ENCODE measurements at regions of chr18 and their contacts with region 1.

Region 1: GRCh38 chr18:77108001-77108692 is 24.4 kb downstream of the MBP start:
- DNase-seq: peak in 3 of 5 donors; percentile 33 to 67 (median 38)
- H3K4me3 ChIP-seq: no peak overlapping the region
- H3K4me3 Mint-ChIP-seq: peak overlapping the region in 7 of 8 donors; percentile 74 to 92 (median 82)
- H3K27ac ChIP-seq: peak overlapping the region; percentile 67
- H3K27ac Mint-ChIP-seq: peak overlapping the region; percentile 86 to 99 (median 97)
- H3K4me1 ChIP-seq: peaks cover 98% of the 10 kb centered on the region
- H3K4me1 Mint-ChIP-seq: peaks cover 78 to 100% (median 88%) of the 10 kb centered on the region in 4 donors
- H3K27me3 ChIP-seq: no peaks in the 10 kb centered on the region
- H3K27me3 Mint-ChIP-seq: no peaks in the 10 kb centered on the region

Region 2: GRCh38 chr18:76699923-76700322 is 408.2 kb before region 1 on chr18:
- CTCF ChIA-PET with region 1: no interaction called
- POLR2A ChIA-PET with region 1: no interaction called
- intact Hi-C with region 1: no loop called
- DNase-seq: no peak
- H3K4me3 ChIP-seq: no peak overlapping the region
- H3K4me3 Mint-ChIP-seq: no peak overlapping the region
- H3K27ac ChIP-seq: no peak overlapping the region
- H3K27ac Mint-ChIP-seq: no peak overlapping the region
- H3K4me1 ChIP-seq: no peaks in the 10 kb centered on the region
- H3K4me1 Mint-ChIP-seq: peaks cover 0 to 2% (median 0%) of the 10 kb centered on the region in 4 donors
- H3K27me3 ChIP-seq: peaks cover 7% of the 10 kb centered on the region
- H3K27me3 Mint-ChIP-seq: peaks cover 29 to 35% of the 10 kb centered on the region in 2 donors

Region 3: DNA sequence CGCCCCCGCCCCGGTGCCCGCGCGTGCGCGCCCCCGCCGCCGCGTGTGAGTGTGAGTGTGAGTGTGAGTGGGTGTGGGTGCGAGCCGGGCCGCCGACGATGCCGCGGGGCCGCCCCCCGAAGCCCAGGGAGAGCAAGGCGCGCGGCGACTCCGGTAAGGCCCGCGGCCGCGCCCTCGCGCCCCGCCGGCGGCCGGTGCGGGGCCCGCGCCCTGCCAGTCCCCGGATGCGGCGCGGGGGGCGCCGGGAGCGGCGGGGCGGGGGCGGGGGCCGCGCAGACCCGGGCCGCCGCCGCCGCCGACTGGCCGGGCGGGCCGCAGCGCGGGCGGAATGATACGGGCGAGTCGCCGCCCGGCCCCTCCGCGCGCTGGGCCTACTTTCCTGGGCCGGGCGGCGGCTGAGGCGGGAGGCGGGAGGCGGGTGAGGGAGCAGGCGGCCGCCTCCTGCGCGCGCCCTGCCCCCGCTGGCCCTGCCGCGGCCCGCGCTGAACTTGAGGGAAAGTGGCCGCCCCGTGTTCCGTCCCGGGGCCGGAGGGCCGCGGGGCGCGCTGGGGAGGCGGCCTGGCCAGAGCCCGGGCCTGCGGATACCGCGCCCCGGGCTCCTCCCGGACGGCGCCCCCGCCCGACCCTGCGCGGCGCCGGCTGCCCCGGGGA is 285.5 kb before region 1 on chr18 and contains the start of gene ZNF236:
- CTCF ChIA-PET with region 1: no interaction called
- POLR2A ChIA-PET with region 1: no interaction called
- intact Hi-C with region 1: no loop called
- DNase-seq: peak; percentile 61 to 74 (median 70)
- H3K4me3 ChIP-seq: peak within 1 kb of the TSS; percentile 93 to 98
- H3K4me3 Mint-ChIP-seq: peak within 1 kb of the TSS; percentile 91 to 97 (median 95)
- H3K27ac ChIP-seq: peak within 1 kb of the TSS; percentile 88
- H3K27ac Mint-ChIP-seq: peak within 1 kb of the TSS; percentile 92 to 97 (median 97)
- H3K4me1 ChIP-seq: peaks cover 47% of the 10 kb centered on the region
- H3K4me1 Mint-ChIP-seq: peaks cover 33 to 69% (median 54%) of the 10 kb centered on the region in 4 donors
- H3K27me3 ChIP-seq: no peaks in the 10 kb centered on the region
- H3K27me3 Mint-ChIP-seq: no peaks in the 10 kb centered on the region
- total RNA-seq, gene ZNF236: 28.3 to 29.1 TPM

Region 4: GRCh38 chr18:77054606-77055428 is 53.3 kb before region 1 on chr18:
- CTCF ChIA-PET with region 1: interaction called, 10 read pairs
- POLR2A ChIA-PET with region 1: interaction called, 14 read pairs
- intact Hi-C with region 1: no loop called
- DNase-seq: peak; percentile 80 to 88 (median 86)
- H3K4me3 ChIP-seq: peak overlapping the region in 1 of 2 donors; percentile 54
- H3K4me3 Mint-ChIP-seq: peak overlapping the region; percentile 72 to 92 (median 86)
- H3K27ac ChIP-seq: peak overlapping the region; percentile 84
- H3K27ac Mint-ChIP-seq: peak overlapping the region; percentile 93 to 100 (median 97)
- H3K4me1 ChIP-seq: peaks cover 83% of the 10 kb centered on the region
- H3K4me1 Mint-ChIP-seq: peaks cover 56 to 79% (median 68%) of the 10 kb centered on the region in 4 donors
- H3K27me3 ChIP-seq: no peaks in the 10 kb centered on the region
- H3K27me3 Mint-ChIP-seq: no peaks in the 10 kb centered on the region

Region 5: DNA sequence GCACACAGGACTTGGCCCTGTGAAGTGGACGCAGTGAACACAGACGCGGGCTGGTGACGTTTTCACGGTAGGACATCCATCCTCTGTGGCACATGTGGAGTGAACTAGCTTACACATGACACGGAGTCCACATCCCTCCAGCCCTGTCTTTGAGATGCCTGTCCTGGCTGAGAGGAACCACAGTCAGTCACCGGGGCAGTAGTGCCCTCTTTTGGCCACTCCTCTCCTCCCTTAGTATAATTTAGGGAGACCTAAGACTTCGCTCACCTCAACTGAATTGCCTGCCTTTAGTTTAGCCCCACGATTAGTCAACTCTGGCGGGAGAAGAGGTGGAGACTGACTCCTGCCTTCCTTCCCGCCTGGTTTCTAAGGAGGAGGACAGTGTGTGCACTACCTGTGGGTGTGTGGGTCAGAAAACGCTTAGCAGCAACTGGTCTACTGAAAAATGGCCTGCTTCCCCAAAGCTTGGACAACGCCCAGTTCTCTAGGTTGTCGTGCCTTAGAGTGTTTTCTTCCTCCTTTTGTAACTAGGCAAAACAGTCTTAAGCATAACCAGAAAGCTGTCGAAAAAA is 46.1 kb before region 1 on chr18:
- CTCF ChIA-PET with region 1: interaction called, 19 read pairs
- POLR2A ChIA-PET with region 1: interaction called, 101 read pairs
- intact Hi-C with region 1: loop called (anchors 1 kb)
- DNase-seq: peak in 1 of 5 donors; percentile 62
- H3K4me3 ChIP-seq: peak overlapping the region in 1 of 2 donors; percentile 8
- H3K4me3 Mint-ChIP-seq: peak overlapping the region; percentile 61 to 92 (median 81)
- H3K27ac ChIP-seq: peak overlapping the region; percentile 77
- H3K27ac Mint-ChIP-seq: peak overlapping the region; percentile 97 to 100 (median 99)
- H3K4me1 ChIP-seq: peaks cover 95% of the 10 kb centered on the region
- H3K4me1 Mint-ChIP-seq: peaks cover 72 to 89% (median 82%) of the 10 kb centered on the region in 4 donors
- H3K27me3 ChIP-seq: no peaks in the 10 kb centered on the region
- H3K27me3 Mint-ChIP-seq: no peaks in the 10 kb centered on the region

Region 6: DNA sequence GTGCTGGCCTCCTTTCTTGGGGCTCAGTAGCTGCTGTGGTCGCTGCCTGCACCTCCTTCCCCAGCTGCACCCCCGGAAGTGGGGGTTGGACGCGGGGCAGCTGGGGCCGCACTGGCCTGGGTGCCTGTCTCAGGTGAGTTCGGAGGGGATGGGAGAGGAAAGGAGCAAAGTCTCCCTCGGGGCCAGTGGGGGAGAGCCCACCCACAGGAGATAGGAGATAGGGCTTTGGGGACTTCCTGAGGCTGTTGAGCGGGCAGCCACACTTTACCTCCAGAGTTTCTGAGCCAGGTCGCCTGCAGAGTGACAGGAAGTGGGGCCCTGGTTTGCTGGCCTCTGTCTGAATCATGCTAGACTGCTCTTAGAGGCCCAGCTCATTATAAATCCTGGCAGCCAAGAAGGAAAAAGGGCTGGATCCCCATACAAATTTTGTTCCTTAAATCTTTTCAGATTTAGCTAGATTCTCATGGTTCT is 16.3 kb after region 1 on chr18:
- CTCF ChIA-PET with region 1: interaction called, 32 read pairs
- POLR2A ChIA-PET with region 1: interaction called, 126 read pairs
- intact Hi-C with region 1: loop called (anchors 1 kb)
- DNase-seq: peak in 4 of 5 donors; percentile 38 to 79 (median 46)
- H3K4me3 ChIP-seq: peak overlapping the region in 1 of 2 donors; percentile 34
- H3K4me3 Mint-ChIP-seq: peak overlapping the region; percentile 71 to 88 (median 80)
- H3K27ac ChIP-seq: peak overlapping the region; percentile 66
- H3K27ac Mint-ChIP-seq: peak overlapping the region; percentile 86 to 96 (median 89)
- H3K4me1 ChIP-seq: peaks cover 99% of the 10 kb centered on the region
- H3K4me1 Mint-ChIP-seq: peaks cover 75 to 100% (median 91%) of the 10 kb centered on the region in 4 donors
- H3K27me3 ChIP-seq: no peaks in the 10 kb centered on the region
- H3K27me3 Mint-ChIP-seq: no peaks in the 10 kb centered on the region

Region 7: DNA sequence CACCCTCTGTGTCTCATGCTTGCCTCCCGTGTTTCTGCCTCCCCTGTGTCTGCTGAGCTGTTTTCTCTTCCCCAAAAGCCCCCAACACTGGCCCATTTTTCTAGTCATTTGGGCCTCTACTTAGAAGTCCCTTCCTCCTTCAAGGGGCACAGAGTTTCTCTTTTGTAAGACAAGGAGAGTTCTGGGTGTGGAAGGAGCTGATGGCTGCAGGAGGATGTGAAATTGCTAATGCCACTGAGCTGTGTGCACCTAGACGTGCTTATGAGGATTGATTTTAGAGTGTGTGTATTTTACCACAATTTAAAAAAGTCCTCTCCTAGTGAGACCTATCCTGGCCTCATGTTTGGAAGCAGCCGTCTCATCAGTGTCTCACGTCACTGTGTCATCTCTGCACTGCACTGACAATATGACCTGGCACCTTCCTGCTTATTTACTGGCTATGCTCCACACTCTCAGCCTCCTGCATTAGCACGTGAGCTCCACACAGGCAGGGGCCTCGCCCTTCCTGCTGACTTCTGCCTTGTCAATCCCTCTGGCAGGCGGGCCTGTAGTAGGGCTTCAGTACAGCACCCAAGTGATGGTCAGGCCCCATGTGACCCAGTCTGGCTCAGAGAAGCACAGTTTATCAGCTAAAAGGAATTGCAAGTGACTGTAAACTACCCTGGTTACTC is 32.4 kb after region 1 on chr18:
- CTCF ChIA-PET with region 1: interaction called, 4 read pairs
- POLR2A ChIA-PET with region 1: interaction called, 8 read pairs
- intact Hi-C with region 1: loop called (anchors 5 kb)
- DNase-seq: peak; percentile 58 to 73 (median 60)
- H3K4me3 ChIP-seq: no peak overlapping the region
- H3K4me3 Mint-ChIP-seq: peak overlapping the region in 7 of 8 donors; percentile 24 to 63 (median 36)
- H3K27ac ChIP-seq: no peak overlapping the region
- H3K27ac Mint-ChIP-seq: peak overlapping the region; percentile 74 to 94 (median 87)
- H3K4me1 ChIP-seq: peaks cover 30% of the 10 kb centered on the region
- H3K4me1 Mint-ChIP-seq: peaks cover 33 to 69% (median 43%) of the 10 kb centered on the region in 4 donors
- H3K27me3 ChIP-seq: no peaks in the 10 kb centered on the region
- H3K27me3 Mint-ChIP-seq: no peaks in the 10 kb centered on the region

Region 8: DNA sequence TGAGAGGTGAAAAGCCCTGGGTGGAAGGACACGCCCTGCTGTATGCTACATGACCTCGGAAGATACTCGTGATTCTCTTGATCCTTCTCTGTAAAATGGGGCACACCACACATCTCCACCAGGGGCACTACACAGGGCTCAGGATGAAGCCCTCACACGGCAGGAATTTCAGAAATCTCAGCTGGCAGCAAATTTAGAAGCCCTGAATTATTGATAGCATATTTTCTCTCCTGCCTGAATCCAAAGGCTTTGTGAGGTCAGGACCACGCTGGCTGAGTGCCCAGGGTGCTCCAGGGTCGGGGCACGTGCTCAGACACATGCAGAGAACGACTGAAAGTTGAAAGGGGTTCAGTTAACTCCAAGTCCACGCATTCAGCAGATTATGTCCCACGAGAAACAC is 99.4 kb after region 1 on chr18:
- CTCF ChIA-PET with region 1: interaction called, 4 read pairs
- POLR2A ChIA-PET with region 1: interaction called, 3 read pairs
- intact Hi-C with region 1: loop called (anchors 5 kb)
- DNase-seq: peak; percentile 55 to 79 (median 67)
- H3K4me3 ChIP-seq: no peak overlapping the region
- H3K4me3 Mint-ChIP-seq: peak overlapping the region; percentile 60 to 80 (median 72)
- H3K27ac ChIP-seq: no peak overlapping the region
- H3K27ac Mint-ChIP-seq: peak overlapping the region; percentile 41 to 92 (median 85)
- H3K4me1 ChIP-seq: peaks cover 37% of the 10 kb centered on the region
- H3K4me1 Mint-ChIP-seq: peaks cover 29 to 52% (median 41%) of the 10 kb centered on the region in 4 donors
- H3K27me3 ChIP-seq: no peaks in the 10 kb centered on the region
- H3K27me3 Mint-ChIP-seq: peaks cover 0 to 4% of the 10 kb centered on the region in 2 donors

Region 9: GRCh38 chr18:77547757-77548156 is 439.6 kb after region 1 on chr18:
- CTCF ChIA-PET with region 1: no interaction called
- POLR2A ChIA-PET with region 1: no interaction called
- intact Hi-C with region 1: no loop called
- DNase-seq: no peak
- H3K4me3 ChIP-seq: no peak overlapping the region
- H3K4me3 Mint-ChIP-seq: no peak overlapping the region
- H3K27ac ChIP-seq: no peak overlapping the region
- H3K27ac Mint-ChIP-seq: no peak overlapping the region
- H3K4me1 ChIP-seq: no peaks in the 10 kb centered on the region
- H3K4me1 Mint-ChIP-seq: peaks cover 0 to 5% (median 0%) of the 10 kb centered on the region in 4 donors
- H3K27me3 ChIP-seq: no peaks in the 10 kb centered on the region
- H3K27me3 Mint-ChIP-seq: peaks cover 0 to 2% of the 10 kb centered on the region in 2 donors

Region 10: DNA sequence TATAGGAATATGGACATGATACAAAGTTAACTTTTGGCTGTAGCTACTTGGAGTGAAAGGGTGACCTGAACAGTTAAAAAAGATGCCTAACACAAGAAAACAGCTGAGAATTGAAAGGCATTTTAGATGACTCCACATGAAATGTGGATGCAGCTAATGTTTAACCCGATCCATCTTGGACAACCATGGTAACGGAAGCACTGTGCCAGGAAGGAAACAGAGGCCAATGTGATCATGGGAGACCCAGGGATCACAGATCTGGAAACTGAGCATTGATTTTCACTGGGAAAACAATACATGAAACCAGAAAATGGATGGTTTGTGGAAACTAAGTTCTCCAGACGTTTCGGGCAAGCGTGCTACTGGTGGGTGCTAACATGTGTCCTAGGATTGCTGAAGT is 810.6 kb after region 1 on chr18:
- CTCF ChIA-PET with region 1: no interaction called
- POLR2A ChIA-PET with region 1: no interaction called
- intact Hi-C with region 1: no loop called
- DNase-seq: no peak
- H3K4me3 ChIP-seq: no peak overlapping the region
- H3K4me3 Mint-ChIP-seq: no peak overlapping the region
- H3K27ac ChIP-seq: no peak overlapping the region
- H3K27ac Mint-ChIP-seq: no peak overlapping the region
- H3K4me1 ChIP-seq: no peaks in the 10 kb centered on the region
- H3K4me1 Mint-ChIP-seq: peaks cover 0 to 4% (median 0%) of the 10 kb centered on the region in 4 donors
- H3K27me3 ChIP-seq: no peaks in the 10 kb centered on the region
- H3K27me3 Mint-ChIP-seq: peaks cover under 1 to 2% of the 10 kb centered on the region in 2 donors

Measured in CD4-positive, alpha-beta memory T cell (primary cell).